ENCODE measurements at regions of chr5 and their contacts with region 1.

Region 1: DNA sequence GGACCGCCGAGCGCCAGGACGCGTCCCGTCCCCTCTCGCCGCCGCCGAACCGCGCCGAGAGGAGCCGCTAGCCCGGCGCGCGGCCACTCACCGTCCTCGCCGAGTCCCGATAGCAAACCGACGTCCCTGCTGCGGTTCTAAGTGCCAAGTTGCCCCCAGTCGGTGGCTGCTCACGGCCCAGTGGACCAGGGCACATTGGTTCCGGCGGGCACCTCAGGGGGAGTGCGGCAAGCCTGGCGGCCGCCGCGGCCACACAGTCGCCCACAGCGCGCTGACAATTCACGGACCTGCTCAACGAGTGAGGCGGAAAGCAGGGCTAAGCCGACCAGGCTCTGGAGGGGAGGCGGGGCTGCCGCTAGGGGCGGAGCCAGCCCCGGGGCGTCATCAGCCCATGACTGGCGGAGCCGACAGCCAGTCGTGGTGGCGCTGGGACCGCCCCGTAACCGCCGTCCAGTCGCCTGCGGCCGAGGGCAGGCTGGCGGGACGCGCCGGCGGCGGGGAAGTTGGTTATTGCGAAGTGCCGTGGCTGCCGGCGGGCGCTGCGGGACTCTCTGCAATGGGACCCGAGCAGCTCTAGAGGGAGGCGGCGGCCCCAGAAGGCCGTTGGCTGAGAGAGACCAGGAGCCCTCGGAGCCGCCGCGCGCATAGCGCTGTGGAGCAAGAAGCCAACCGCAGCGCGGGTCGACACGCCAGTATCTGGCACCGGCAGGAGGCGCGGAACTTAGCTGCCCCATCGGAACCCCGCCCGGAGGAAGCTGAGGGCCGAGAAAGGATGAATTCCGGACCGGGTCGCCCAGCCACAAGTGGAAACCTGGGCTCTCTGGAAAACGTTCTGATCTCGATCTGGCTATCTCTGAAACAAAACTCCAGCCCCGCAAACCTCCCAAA is at the start of gene MARCHF3:
- DNase-seq: peak; percentile 96
- H3K4me3 ChIP-seq: peak within 1 kb of the TSS; percentile 63 to 98 (median 80)
- H3K27ac ChIP-seq: peak within 1 kb of the TSS; percentile 44
- H3K4me1 ChIP-seq: peaks cover 12% of the 10 kb centered on the region
- H3K27me3 ChIP-seq: no peaks in the 10 kb centered on the region
- CTCF ChIP-seq: peak in 1 of 2 donors; percentile 42
- total RNA-seq, gene MARCHF3: 4.0 to 5.0 TPM

Region 2: DNA sequence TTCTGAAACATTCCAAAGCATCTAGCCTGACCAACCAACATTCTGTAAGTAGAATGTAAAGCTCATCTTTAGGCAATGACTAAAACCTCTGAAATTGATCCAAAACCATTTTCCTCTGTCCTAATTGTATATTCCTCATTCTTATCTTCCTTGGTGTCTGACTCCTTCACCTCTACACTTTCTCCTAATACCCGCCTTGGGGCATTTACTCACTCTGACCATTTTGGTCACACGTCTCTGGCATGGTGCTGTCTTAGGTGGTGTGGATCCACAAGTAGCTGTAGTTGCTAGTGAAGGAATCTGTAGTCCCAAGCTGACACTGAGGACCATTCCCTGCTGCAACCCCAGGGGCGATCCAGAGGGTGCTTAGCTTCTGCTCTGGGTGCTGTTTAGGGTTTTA is 294.4 kb before region 1 on chr5:
- CTCF ChIA-PET with region 1: no interaction called
- dilution Hi-C with region 1: no loop called
- in situ Hi-C with region 1: no loop called
- intact Hi-C with region 1: no loop called
- DNase-seq: peak; percentile 37
- H3K4me3 ChIP-seq: no peak overlapping the region
- H3K27ac ChIP-seq: no peak overlapping the region
- H3K4me1 ChIP-seq: no peaks in the 10 kb centered on the region
- H3K27me3 ChIP-seq: no peaks in the 10 kb centered on the region
- CTCF ChIP-seq: no peak

Region 3: GRCh38 chr5:126857472-126858410 is 172.8 kb before region 1 on chr5:
- CTCF ChIA-PET with region 1: interaction called, 7 read pairs
- dilution Hi-C with region 1: no loop called
- in situ Hi-C with region 1: no loop called
- intact Hi-C with region 1: loop called (anchors 1 kb)
- DNase-seq: no peak
- H3K4me3 ChIP-seq: no peak overlapping the region
- H3K27ac ChIP-seq: no peak overlapping the region
- H3K4me1 ChIP-seq: peaks cover 5% of the 10 kb centered on the region
- H3K27me3 ChIP-seq: no peaks in the 10 kb centered on the region
- CTCF ChIP-seq: no peak